Spleen (tissue), 13 donors: ENCODE measurements at regions of chr4 and their contacts with region 1.

Region 1: GRCh38 chr4:4256799-4257198 is 8.8 kb upstream of the TMEM128 start:
- DNase-seq: no peak
- H3K4me3 ChIP-seq: no peak overlapping the region
- H3K27ac ChIP-seq: no peak overlapping the region
- H3K4me1 ChIP-seq: peaks cover 0 to 5% (median 1%) of the 10 kb centered on the region in 6 donors
- H3K27me3 ChIP-seq: peaks cover 0 to 13% (median 0%) of the 10 kb centered on the region in 7 donors
- CTCF ChIP-seq: no peak
- POLR2A ChIP-seq: no peak

Region 2: DNA sequence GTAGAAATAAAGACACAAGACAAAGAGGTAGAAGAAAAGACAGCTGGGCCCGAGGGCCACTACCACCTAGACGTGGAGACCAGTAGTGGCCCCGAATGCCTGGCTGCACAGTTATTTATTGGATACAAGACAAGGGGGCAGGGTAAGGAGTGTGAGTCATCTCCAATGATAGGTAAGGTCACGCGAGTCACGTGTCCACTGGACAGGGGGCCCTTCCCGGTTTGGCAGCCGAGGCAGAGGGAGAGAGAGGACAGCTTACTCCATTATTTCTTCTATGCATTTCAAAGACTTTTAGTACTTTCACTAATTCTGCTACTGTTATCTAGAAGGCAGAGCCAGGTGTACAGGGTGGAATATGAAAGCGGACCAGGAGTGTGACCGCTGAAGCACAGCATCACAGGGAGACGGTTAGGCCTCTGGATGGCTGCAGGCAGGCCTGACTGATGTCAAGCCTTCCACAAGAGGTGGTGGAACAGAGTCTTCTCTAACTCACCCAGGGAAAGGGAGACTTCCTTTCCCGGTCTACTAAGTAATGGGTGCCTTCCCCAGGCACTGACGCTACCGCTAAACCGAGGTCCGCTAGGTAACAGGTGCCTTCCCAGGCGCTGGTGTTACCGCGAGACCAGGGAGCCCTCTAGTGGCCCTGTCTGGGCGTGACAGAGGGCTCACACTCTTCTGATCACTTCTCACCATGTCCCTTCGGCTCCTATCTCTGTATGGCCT is 78.2 kb after region 1 on chr4:
- intact Hi-C with region 1: loop called (anchors 5 kb)
- DNase-seq: peak; percentile 91
- H3K4me3 ChIP-seq: no peak overlapping the region
- H3K27ac ChIP-seq: no peak overlapping the region
- H3K4me1 ChIP-seq: peaks cover 0 to 23% (median 7%) of the 10 kb centered on the region in 6 donors
- H3K27me3 ChIP-seq: no peaks in the 10 kb centered on the region
- CTCF ChIP-seq: peak; percentile 46 to 90 (median 76)
- POLR2A ChIP-seq: no peak